ENCODE measurements at regions of chr16 and their contacts with region 1.

Region 1: GRCh38 chr16:636206-637080 is at the start of gene METTL26:
- DNase-seq: peak; percentile 91 to 98 (median 94)
- ATAC-seq: peak; percentile 90
- H3K4me3 ChIP-seq: peak within 1 kb of the TSS; percentile 99
- H3K4me3 Mint-ChIP-seq: peak within 1 kb of the TSS; percentile 92 to 99 (median 98)
- H3K27ac ChIP-seq: peak within 1 kb of the TSS; percentile 76
- H3K27ac Mint-ChIP-seq: peak within 1 kb of the TSS; percentile 97 to 99 (median 99)
- H3K4me1 ChIP-seq: peaks cover 5 to 14% of the 10 kb centered on the region in 2 donors
- H3K4me1 Mint-ChIP-seq: peaks cover 0 to 13% (median 10%) of the 10 kb centered on the region in 7 donors
- H3K27me3 ChIP-seq: no peaks in the 10 kb centered on the region
- H3K27me3 Mint-ChIP-seq: peaks cover 0 to 6% (median 0%) of the 10 kb centered on the region in 5 donors
- total RNA-seq, gene METTL26: 41.7 to 97.5 (median 64.0) TPM

Region 2: GRCh38 chr16:389352-389751 is 247.1 kb before region 1 on chr16:
- CTCF ChIA-PET with region 1: no interaction called
- POLR2A ChIA-PET with region 1: no interaction called
- intact Hi-C with region 1: no loop called
- DNase-seq: no peak
- ATAC-seq: no peak
- H3K4me3 ChIP-seq: no peak overlapping the region
- H3K4me3 Mint-ChIP-seq: no peak overlapping the region
- H3K27ac ChIP-seq: no peak overlapping the region
- H3K27ac Mint-ChIP-seq: no peak overlapping the region
- H3K4me1 ChIP-seq: peaks cover 0 to 4% of the 10 kb centered on the region in 2 donors
- H3K4me1 Mint-ChIP-seq: peaks cover 0 to 18% (median 5%) of the 10 kb centered on the region in 7 donors
- H3K27me3 ChIP-seq: no peaks in the 10 kb centered on the region
- H3K27me3 Mint-ChIP-seq: no peaks in the 10 kb centered on the region

Region 3: DNA sequence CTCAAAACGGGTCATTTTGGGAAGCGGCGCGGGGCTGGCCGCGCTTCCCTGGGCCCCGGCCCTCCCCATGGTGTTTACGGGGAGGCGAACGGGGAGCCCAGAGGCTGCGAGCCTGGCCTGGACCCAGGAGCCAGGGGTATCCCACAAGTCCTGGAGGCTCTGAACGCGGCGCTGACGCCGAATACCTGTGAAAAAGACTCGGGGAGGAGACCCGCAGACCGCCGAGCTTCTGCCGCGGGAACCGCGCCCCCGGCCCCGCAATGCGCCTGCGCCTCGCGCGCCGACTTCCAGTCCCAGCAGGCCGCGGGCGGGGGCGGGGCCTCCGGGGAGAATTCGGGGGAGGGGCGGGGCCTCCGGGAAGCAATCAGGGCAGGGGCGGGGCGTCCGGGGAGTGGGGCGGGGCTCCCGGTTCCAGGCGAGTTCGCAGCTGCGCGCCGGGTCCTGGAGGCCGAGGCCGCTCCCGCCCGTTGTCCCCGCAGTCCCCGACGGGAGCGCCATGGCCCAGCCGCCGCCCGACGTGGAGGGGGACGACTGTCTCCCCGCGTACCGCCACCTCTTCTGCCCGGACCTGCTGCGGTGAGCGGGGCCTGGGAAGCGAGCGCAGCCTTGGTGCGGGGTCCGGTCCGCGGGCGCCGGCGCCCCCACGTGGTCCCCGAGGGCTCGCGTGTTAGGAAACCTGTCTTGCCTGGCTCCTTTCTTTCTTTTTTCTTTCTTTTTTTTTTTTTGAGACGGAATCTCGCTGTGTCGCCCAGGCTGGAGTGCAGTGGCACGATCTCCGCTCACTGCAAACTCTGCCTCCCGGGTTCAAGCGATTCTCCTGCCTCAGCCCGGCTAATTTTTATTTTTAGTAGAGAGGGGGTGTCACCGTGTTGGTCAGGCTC is 234.7 kb before region 1 on chr16 and contains the start of gene DECR2:
- CTCF ChIA-PET with region 1: no interaction called
- POLR2A ChIA-PET with region 1: no interaction called
- intact Hi-C with region 1: loop called (anchors 1 to 2 kb)
- DNase-seq: peak; percentile 89 to 98 (median 95)
- ATAC-seq: peak; percentile 94
- H3K4me3 ChIP-seq: peak within 1 kb of the TSS; percentile 86
- H3K4me3 Mint-ChIP-seq: peak within 1 kb of the TSS; percentile 84 to 92 (median 89)
- H3K27ac ChIP-seq: peak within 1 kb of the TSS; percentile 82
- H3K27ac Mint-ChIP-seq: peak within 1 kb of the TSS; percentile 81 to 97 (median 94)
- H3K4me1 ChIP-seq: peaks cover 0 to 5% of the 10 kb centered on the region in 2 donors
- H3K4me1 Mint-ChIP-seq: peaks cover 10 to 21% (median 11%) of the 10 kb centered on the region in 7 donors
- H3K27me3 ChIP-seq: no peaks in the 10 kb centered on the region
- H3K27me3 Mint-ChIP-seq: peaks cover 0 to 1% (median 0%) of the 10 kb centered on the region in 5 donors
- total RNA-seq, gene DECR2: 7.9 to 13.8 (median 11.6) TPM

Region 4: GRCh38 chr16:569445-570254 is 66.8 kb before region 1 on chr16 and contains the start of gene PIGQ:
- CTCF ChIA-PET with region 1: no interaction called
- POLR2A ChIA-PET with region 1: interaction called, 7 read pairs
- intact Hi-C with region 1: loop called (anchors 1 to 5 kb)
- DNase-seq: peak; percentile 47 to 80 (median 62)
- ATAC-seq: peak; percentile 79
- H3K4me3 ChIP-seq: peak within 1 kb of the TSS; percentile 58
- H3K4me3 Mint-ChIP-seq: peak within 1 kb of the TSS; percentile 76 to 90 (median 85)
- H3K27ac ChIP-seq: peak within 1 kb of the TSS; percentile 89
- H3K27ac Mint-ChIP-seq: peak within 1 kb of the TSS; percentile 81 to 96 (median 89)
- H3K4me1 ChIP-seq: peaks cover 13 to 32% of the 10 kb centered on the region in 2 donors
- H3K4me1 Mint-ChIP-seq: peaks cover 15 to 39% (median 28%) of the 10 kb centered on the region in 7 donors
- H3K27me3 ChIP-seq: no peaks in the 10 kb centered on the region
- H3K27me3 Mint-ChIP-seq: no peaks in the 10 kb centered on the region
- total RNA-seq, gene PIGQ: 27.1 to 63.0 (median 45.1) TPM

Region 5: GRCh38 chr16:660459-661183 is 24.2 kb after region 1 on chr16:
- CTCF ChIA-PET with region 1: no interaction called
- POLR2A ChIA-PET with region 1: no interaction called
- intact Hi-C with region 1: loop called in 1 of 2 experiments (anchors 2 kb)
- DNase-seq: peak in 8 of 9 donors; percentile 44 to 74 (median 59)
- ATAC-seq: peak; percentile 90
- H3K4me3 ChIP-seq: no peak overlapping the region
- H3K4me3 Mint-ChIP-seq: peak overlapping the region in 3 of 10 donors; percentile 33 to 37 (median 35)
- H3K27ac ChIP-seq: peak overlapping the region; percentile 3
- H3K27ac Mint-ChIP-seq: peak overlapping the region in 2 of 9 donors; percentile 45 to 46
- H3K4me1 ChIP-seq: peaks cover 0 to 7% of the 10 kb centered on the region in 2 donors
- H3K4me1 Mint-ChIP-seq: peaks cover 0 to 9% (median 4%) of the 10 kb centered on the region in 7 donors
- H3K27me3 ChIP-seq: no peaks in the 10 kb centered on the region
- H3K27me3 Mint-ChIP-seq: no peaks in the 10 kb centered on the region

Region 6: GRCh38 chr16:695355-696089 is 59.1 kb after region 1 on chr16:
- CTCF ChIA-PET with region 1: no interaction called
- POLR2A ChIA-PET with region 1: interaction called, 12 read pairs
- intact Hi-C with region 1: no loop called
- DNase-seq: peak; percentile 53 to 81 (median 74)
- ATAC-seq: peak; percentile 90
- H3K4me3 ChIP-seq: peak overlapping the region; percentile 91
- H3K4me3 Mint-ChIP-seq: peak overlapping the region; percentile 76 to 86 (median 84)
- H3K27ac ChIP-seq: peak overlapping the region; percentile 54
- H3K27ac Mint-ChIP-seq: peak overlapping the region; percentile 20 to 86 (median 79)
- H3K4me1 ChIP-seq: peaks cover 22 to 26% of the 10 kb centered on the region in 2 donors
- H3K4me1 Mint-ChIP-seq: peaks cover 4 to 40% (median 23%) of the 10 kb centered on the region in 7 donors
- H3K27me3 ChIP-seq: no peaks in the 10 kb centered on the region
- H3K27me3 Mint-ChIP-seq: peaks cover 0 to 22% (median 0%) of the 10 kb centered on the region in 5 donors

Region 7: GRCh38 chr16:1152651-1153259 is 516.3 kb after region 1 on chr16 and contains the start of gene CACNA1H:
- CTCF ChIA-PET with region 1: no interaction called
- POLR2A ChIA-PET with region 1: no interaction called
- intact Hi-C with region 1: no loop called
- DNase-seq: peak; percentile 56 to 86 (median 70)
- ATAC-seq: peak; percentile 86
- H3K4me3 ChIP-seq: no peak within 1 kb of the TSS
- H3K4me3 Mint-ChIP-seq: peak within 1 kb of the TSS in 9 of 10 donors; percentile 44 to 81 (median 64)
- H3K27ac ChIP-seq: peak within 1 kb of the TSS; percentile 8
- H3K27ac Mint-ChIP-seq: peak within 1 kb of the TSS in 1 of 9 donors; percentile 65
- H3K4me1 ChIP-seq: peaks cover 3 to 16% of the 10 kb centered on the region in 2 donors
- H3K4me1 Mint-ChIP-seq: no peaks in the 10 kb centered on the region
- H3K27me3 ChIP-seq: no peaks in the 10 kb centered on the region
- H3K27me3 Mint-ChIP-seq: peaks cover 0 to 18% (median 6%) of the 10 kb centered on the region in 5 donors
- total RNA-seq, gene CACNA1H: 0.31 to 8.8 (median 2.2) TPM

Region 8: DNA sequence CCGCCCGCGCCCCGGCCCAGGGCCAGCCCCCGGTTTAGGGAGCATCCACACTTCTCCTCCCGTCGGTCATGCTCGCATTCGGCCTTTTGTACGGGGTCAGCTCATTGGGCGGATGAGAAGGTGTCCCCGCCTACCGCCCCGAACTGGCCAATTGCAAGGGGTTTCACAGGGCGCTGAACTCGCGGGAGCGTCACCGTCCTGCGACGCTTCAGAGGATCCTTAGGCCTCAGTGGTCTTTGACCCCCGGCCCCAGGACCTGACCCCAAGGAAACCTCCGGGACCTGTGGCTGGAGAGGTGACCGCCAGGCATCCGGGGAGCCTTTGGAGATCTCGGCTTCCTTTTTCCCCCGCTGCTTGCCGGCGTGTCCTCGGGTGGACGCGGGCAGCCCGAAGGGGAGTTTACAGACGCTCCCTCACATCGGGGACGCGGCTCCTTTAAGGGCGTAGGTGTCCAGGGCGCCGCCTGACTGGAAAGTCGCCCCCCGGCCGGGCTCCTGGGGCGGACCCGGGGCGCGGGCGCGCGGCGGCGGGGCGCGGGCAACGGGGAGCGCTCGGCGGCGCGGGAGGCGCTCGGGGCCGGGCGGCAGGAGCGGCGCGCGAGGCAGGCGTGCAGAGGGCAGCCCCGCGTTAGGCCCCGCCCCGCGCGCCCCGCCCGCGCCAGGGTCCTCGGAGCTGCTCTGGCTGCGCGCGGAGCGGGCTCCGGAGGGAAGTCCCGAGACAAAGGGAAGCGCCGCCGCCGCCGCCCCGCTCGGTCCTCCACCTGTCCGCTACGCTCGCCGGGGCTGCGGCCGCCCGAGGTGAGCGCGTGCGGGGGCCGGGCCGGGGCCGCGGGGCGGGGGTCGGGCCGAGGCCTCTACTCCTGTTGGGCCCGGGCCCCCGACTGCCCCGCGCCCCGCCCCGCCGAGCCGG is 672.8 kb after region 1 on chr16 and contains the start of gene UBE2I:
- CTCF ChIA-PET with region 1: no interaction called
- POLR2A ChIA-PET with region 1: no interaction called
- intact Hi-C with region 1: loop called in 1 of 2 experiments (anchors 1 kb)
- DNase-seq: peak; percentile 95 to 100 (median 99)
- ATAC-seq: peak; percentile 85
- H3K4me3 ChIP-seq: peak within 1 kb of the TSS; percentile 95
- H3K4me3 Mint-ChIP-seq: peak within 1 kb of the TSS; percentile 92 to 100 (median 98)
- H3K27ac ChIP-seq: peak within 1 kb of the TSS; percentile 99
- H3K27ac Mint-ChIP-seq: peak within 1 kb of the TSS; percentile 97 to 100 (median 99)
- H3K4me1 ChIP-seq: peaks cover 27 to 33% of the 10 kb centered on the region in 2 donors
- H3K4me1 Mint-ChIP-seq: peaks cover 15 to 56% (median 34%) of the 10 kb centered on the region in 7 donors
- H3K27me3 ChIP-seq: no peaks in the 10 kb centered on the region
- H3K27me3 Mint-ChIP-seq: no peaks in the 10 kb centered on the region
- total RNA-seq, gene UBE2I: 159 to 277 (median 203) TPM

Measured in naive thymus-derived CD4-positive, alpha-beta T cell (primary cell).